ENCODE measurements at regions of chr22 and their contacts with region 1.

Region 1: DNA sequence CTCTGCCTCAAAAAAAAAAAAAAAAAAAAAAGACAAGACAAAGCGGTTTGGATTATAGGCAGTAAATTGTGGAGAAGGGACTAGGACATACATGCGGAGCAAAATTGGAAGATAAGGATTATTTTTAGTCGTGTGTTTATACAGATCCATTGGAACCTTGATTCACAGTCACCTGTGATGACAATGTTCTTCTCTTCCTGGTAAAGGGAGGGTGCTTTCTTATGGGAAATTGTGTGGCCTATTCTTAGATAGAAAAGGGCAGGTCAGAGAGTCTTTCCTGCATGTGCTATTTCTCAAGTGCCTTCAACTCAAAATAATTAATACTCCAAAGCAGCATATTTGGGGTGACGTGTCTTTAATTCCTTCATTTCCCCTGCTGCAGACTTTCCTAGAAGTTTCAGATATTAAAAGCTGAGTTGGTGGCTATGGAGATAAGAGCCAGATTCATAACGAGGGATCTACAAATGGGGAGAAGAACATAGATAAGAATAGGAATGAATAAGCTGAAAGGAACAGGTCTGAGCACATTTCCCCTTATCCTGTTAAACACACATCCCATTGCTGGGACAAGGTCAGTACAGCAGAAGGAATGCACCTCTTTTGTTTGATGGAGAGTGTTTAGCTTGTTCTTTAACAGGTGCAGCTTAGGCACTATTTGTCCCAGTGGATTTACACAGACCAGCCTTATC is 22.5 kb downstream of the GSTT2B start:
- DNase-seq: no peak
- ATAC-seq: no peak

Region 2: GRCh38 chr22:23878219-23878618 is 60.3 kb before region 1 on chr22:
- intact Hi-C with region 1: loop called in 1 of 2 experiments (anchors 10 kb)
- DNase-seq: no peak
- ATAC-seq: peak; percentile 25 to 41

Region 3: DNA sequence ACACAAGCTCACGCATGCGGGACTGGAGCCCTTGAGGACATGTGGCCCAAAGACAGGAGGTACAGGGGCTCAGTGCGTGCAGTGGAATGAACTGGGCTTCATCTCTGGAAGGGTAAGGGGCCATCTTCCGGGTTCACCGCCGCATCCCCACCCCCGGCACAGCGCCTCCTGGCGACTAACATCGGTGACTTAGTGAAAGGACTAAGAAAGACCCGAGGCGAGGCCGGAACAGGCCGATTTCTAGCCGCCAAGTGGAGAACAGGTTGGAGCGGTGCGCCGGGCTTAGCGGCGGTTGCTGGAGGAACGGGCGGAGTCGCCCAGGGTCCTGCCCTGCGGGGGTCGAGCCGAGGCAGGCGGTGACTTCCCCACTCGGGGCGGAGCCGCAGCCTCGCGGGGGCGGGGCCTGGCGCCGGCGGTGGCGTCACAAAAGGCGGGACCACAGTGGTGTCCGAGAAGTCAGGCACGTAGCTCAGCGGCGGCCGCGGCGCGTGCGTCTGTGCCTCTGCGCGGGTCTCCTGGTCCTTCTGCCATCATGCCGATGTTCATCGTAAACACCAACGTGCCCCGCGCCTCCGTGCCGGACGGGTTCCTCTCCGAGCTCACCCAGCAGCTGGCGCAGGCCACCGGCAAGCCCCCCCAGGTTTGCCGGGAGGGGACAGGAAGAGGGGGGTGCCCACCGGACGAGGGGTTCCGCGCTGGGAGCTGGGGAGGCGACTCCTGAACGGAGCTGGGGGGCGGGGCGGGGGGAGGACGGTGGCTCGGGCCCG is 44.3 kb before region 1 on chr22 and contains the start of gene MIF:
- intact Hi-C with region 1: no loop called
- DNase-seq: peak; percentile 96
- ATAC-seq: peak; percentile 93 to 94
- total RNA-seq, gene MIF: 292 to 347 TPM

Measured in left cardiac atrium (tissue), 4 donors.